Sigmoid colon (tissue), 7 donors: ENCODE measurements at regions of chr21 and their contacts with region 1.

Region 1: DNA sequence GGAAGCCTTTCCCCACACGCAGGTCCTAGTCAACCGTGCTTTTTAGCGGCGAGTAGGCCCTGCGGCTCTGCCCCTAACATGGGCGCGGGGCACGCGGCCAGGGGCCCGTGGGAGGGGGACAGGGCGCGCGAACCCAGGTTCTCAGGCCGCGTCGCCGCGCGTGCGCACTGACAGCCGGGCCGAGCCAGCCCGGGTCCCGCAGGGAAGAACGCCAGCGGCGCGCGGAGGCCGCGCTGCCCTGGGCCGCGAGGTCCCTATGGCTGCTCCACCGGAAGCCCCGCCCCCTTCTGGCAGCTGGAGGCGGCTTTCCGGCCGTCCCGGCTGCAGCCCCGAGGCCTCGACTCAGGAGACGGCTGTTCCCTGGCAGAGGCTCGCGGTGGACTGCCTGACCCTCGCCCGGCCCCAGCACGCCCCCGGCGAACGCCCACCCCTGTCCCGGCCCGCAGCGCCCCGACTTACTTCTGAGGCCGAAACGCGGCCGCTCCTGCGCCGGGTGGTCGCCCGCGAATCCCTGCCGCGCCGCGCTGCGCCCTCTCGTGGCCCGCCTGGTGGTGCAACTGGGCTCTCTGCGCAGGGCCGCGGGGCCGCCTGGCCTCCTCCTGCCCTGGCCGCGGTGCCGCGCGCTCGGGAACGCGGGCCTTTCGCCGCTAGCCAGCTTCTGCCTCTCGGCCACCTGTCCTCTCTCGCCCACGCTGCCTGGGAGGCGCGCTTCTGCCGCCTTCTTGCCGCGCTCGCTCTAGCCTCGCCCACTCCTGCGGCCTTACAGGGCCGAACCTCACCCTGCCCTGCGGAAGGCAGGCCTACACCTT is 16.6 kb upstream of the RIPPLY3 start:
- DNase-seq: peak; percentile 97
- H3K4me3 ChIP-seq: peak overlapping the region; percentile 53 to 60 (median 58)
- H3K27ac ChIP-seq: peak overlapping the region; percentile 86 to 92 (median 88)
- H3K4me1 ChIP-seq: peaks cover 0 to 9% (median 0%) of the 10 kb centered on the region in 4 donors
- H3K27me3 ChIP-seq: peaks cover 0 to 13% (median 7%) of the 10 kb centered on the region in 3 donors
- CTCF ChIP-seq: peak in 2 of 4 experiments; percentile 70 to 94
- EP300 ChIP-seq: no peak
- POLR2A ChIP-seq: no peak

Region 2: DNA sequence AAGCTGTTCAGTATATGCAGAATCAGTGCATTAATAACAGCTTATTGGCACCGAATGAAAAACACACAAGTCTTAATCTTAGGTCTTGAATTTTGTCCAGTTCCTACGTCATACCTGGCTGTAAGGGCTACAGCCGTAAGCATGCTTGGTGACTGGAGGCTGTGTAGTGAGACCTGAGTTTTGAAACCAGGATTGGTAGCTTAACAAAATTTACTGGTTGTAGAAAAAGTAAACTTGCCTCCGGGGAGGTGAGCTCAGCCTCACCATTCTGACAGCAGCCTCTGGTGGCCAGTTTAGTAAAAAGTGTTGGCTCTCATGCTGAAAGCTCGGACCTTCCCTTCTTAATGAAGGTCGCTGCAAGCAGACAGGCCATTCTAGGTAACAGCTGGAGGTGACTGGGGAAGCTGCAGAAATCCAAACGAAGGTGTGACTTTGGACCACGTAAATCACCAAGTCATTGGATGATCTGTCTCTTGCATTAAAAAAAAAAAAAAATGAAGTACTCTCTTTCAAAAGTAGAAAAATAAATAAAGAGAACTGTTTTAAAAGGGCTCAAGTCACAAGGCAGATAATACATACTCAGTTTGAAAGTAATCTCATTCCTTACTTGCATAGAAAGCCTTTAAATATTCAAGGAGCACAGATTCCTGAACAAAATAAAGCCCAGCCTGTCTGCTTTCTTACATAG is 72.3 kb before region 1 on chr21:
- intact Hi-C with region 1: no loop called
- DNase-seq: no peak
- H3K4me3 ChIP-seq: no peak overlapping the region
- H3K27ac ChIP-seq: no peak overlapping the region
- H3K4me1 ChIP-seq: peaks cover 0 to 11% (median 4%) of the 10 kb centered on the region in 4 donors
- H3K27me3 ChIP-seq: no peaks in the 10 kb centered on the region
- CTCF ChIP-seq: no peak
- EP300 ChIP-seq: no peak
- POLR2A ChIP-seq: no peak

Region 3: GRCh38 chr21:36934864-36935420 is 55.0 kb before region 1 on chr21:
- intact Hi-C with region 1: loop called (anchors 5 kb)
- DNase-seq: no peak
- H3K4me3 ChIP-seq: no peak overlapping the region
- H3K27ac ChIP-seq: no peak overlapping the region
- H3K4me1 ChIP-seq: peaks cover 0 to 6% (median 3%) of the 10 kb centered on the region in 4 donors
- H3K27me3 ChIP-seq: no peaks in the 10 kb centered on the region
- CTCF ChIP-seq: no peak
- EP300 ChIP-seq: no peak
- POLR2A ChIP-seq: no peak

Region 4: DNA sequence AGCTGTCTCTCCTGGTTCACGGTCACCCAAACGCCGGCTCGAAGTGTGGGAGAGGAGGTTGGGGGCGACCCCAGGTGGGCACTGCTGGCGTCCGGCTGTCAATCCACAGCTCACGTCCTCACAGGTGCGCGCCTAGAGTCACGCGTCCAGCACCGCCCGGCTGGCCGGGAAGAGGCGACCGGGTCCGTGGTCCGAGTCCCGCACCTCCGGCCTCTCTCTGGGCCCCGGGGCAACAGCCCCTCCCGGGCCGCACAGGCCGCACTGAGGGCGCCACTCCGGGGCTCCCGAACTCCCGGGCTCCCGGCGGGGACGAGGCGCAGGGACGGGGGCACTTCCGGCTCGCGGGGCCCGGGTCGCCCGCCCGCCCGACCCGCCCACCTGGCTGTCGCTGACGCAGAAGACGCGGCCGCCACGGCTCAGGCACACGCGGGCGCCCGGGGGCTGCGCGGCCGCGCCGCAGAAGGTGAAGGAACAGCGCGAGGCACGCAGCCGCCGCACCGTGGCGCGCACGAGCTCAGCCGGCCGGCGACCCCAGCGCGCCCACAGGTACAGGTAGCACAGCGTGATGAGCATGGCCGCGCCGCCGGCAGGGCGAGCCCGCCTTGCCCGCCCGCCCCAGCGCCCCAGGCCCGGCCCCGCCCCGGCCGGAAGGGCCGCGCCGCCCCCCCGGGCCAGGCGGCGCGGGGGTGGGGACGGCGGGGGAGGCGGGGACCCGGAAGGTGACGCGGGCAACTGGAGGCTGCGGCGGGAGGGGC is 23.7 kb before region 1 on chr21 and contains the start of gene HLCS:
- intact Hi-C with region 1: loop called (anchors 1 kb)
- DNase-seq: peak; percentile 85
- H3K4me3 ChIP-seq: peak within 1 kb of the TSS; percentile 68 to 85 (median 77)
- H3K27ac ChIP-seq: peak within 1 kb of the TSS; percentile 78 to 87 (median 84)
- H3K4me1 ChIP-seq: peaks cover 0 to 20% (median 5%) of the 10 kb centered on the region in 4 donors
- H3K27me3 ChIP-seq: no peaks in the 10 kb centered on the region
- CTCF ChIP-seq: peak in 1 of 4 experiments; percentile 17
- EP300 ChIP-seq: no peak
- POLR2A ChIP-seq: no peak
- total RNA-seq, gene HLCS: 12.5 to 26.0 (median 15.6) TPM